Esophagus squamous epithelium (tissue), 5 donors: ENCODE measurements at regions of chr13 and their contacts with region 1.

Region 1: DNA sequence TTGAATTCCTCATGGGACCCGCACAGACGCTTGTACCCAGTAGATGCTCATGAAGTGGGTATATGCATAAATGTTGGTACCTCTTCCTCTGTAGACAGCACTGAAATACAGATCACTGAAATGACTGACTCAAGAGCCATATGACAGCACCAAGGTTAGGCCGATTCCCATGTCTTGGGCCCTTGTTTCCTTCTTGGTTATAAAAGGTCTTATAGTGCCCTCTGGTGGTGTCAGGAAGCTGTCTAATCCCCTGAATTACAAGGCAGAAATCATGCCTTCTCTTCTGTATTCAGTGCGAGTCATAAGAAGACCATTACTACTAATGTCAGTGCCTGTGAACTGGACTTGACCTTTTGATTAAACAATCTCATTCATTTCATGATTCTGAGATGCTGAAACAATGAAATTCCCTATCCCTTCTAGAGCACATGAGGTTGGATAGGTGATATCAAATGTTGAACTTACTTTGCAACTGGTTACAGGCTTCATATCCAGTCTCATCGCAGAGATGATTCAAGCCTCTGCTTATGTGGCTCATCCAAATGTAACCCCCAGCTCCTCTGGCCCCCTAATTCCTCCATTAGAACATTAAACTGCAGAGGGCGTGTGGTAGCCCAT is 59.7 kb downstream of the SPATA13 start:
- DNase-seq: no peak
- H3K4me3 ChIP-seq: no peak overlapping the region
- H3K27ac ChIP-seq: peak overlapping the region in 1 of 4 donors; percentile 30
- H3K4me1 ChIP-seq: peaks cover 0 to 27% (median 18%) of the 10 kb centered on the region in 3 donors
- H3K27me3 ChIP-seq: no peaks in the 10 kb centered on the region
- CTCF ChIP-seq: peak; percentile 54 to 89 (median 78)
- POLR2A ChIP-seq: no peak

Region 2: GRCh38 chr13:23921451-23921888 is 298.7 kb before region 1 on chr13:
- intact Hi-C with region 1: loop called (anchors 10 kb)
- DNase-seq: no peak
- H3K4me3 ChIP-seq: no peak overlapping the region
- H3K27ac ChIP-seq: no peak overlapping the region
- H3K4me1 ChIP-seq: no peaks in the 10 kb centered on the region
- H3K27me3 ChIP-seq: peaks cover 0 to 5% (median 0%) of the 10 kb centered on the region in 4 donors
- CTCF ChIP-seq: peak; percentile 46 to 80 (median 58)
- POLR2A ChIP-seq: no peak

Region 3: DNA sequence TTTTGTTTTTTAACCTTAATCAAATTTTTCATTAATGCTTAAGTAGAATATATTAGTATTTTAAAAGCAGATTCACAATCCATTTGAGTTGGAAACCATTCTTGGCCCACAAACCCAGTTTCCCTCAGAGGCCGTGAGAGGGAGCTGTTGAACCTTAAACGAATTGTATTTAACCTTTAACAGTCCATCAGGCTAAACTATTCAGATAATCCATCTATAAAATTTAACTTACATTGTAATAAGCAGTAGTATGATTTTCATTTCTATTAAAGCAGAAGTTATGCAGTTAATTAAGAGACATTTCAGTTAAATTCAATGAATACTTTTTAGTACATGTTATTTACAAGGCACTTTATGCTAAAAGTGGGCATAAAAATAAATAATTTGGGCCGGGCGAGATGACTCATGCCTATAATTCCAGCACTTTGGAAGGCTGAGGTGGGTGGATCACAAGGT is 199.8 kb before region 1 on chr13:
- intact Hi-C with region 1: loop called (anchors 5 kb)
- DNase-seq: no peak
- H3K4me3 ChIP-seq: no peak overlapping the region
- H3K27ac ChIP-seq: no peak overlapping the region
- H3K4me1 ChIP-seq: peaks cover 0 to 3% (median 0%) of the 10 kb centered on the region in 3 donors
- H3K27me3 ChIP-seq: no peaks in the 10 kb centered on the region
- CTCF ChIP-seq: peak in 5 of 6 experiments; percentile 66 to 77 (median 66)
- POLR2A ChIP-seq: no peak

Region 4: DNA sequence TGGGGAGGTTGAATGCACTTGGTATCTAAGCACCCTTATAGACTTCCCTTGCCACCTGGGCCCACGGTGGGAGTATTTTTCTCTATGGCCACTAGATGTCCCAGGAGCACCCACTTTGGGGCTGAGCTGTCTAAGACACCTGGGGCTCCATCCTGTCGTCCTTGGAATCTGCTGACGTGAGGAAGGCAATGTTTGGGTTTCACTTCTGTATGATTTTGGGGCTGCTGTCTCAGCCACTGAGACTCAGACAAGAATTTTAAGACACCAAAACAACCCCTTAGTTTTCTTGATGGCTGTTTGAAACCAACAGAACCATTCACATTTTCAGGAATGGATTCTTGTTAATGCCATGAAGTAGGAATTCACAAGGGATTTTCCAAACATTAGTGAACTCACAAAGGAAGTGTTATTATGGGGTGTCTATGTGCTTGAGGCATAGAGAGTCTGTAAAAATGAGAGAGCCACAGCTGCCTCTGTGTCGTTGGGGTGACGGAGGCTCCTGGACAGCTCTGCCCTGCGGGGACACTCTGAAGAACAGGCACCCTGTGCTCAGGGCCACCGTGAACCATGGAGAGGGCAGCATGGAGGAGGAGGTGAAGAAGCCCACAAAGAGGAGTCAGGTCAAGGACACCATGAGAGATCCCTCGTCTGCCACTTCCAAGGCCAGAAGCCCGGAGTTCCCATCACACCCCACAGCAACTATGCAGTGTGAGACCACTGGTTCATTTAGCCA is 166.5 kb before region 1 on chr13:
- intact Hi-C with region 1: loop called (anchors 10 kb)
- DNase-seq: no peak
- H3K4me3 ChIP-seq: no peak overlapping the region
- H3K27ac ChIP-seq: peak overlapping the region in 3 of 4 donors; percentile 35 to 73 (median 63)
- H3K4me1 ChIP-seq: peaks cover 13 to 42% (median 18%) of the 10 kb centered on the region in 3 donors
- H3K27me3 ChIP-seq: no peaks in the 10 kb centered on the region
- CTCF ChIP-seq: peak; percentile 27 to 79 (median 67)
- POLR2A ChIP-seq: no peak